CD4-positive, alpha-beta T cell (primary cell): ENCODE measurements at regions of chr7 and their contacts with region 1.

Region 1: GRCh38 chr7:35801392-35802101 is 690 bp downstream of the SEPTIN7 start:
- DNase-seq: peak; percentile 56 to 91 (median 72)
- ATAC-seq: peak; percentile 35
- H3K4me3 ChIP-seq: peak overlapping the region; percentile 84
- H3K4me3 Mint-ChIP-seq: peak overlapping the region; percentile 94
- H3K27ac ChIP-seq: peak overlapping the region; percentile 94 to 99
- H3K27ac Mint-ChIP-seq: peak overlapping the region; percentile 98
- H3K4me1 ChIP-seq: peaks cover 21% of the 10 kb centered on the region
- H3K4me1 Mint-ChIP-seq: peaks cover 55% of the 10 kb centered on the region
- H3K27me3 ChIP-seq: no peaks in the 10 kb centered on the region
- H3K27me3 Mint-ChIP-seq: no peaks in the 10 kb centered on the region
- CTCF ChIP-seq: peak; percentile 41

Region 2: GRCh38 chr7:35694781-35695472 is 106.6 kb before region 1 on chr7 and contains the start of gene HERPUD2:
- CTCF ChIA-PET with region 1: no interaction called
- POLR2A ChIA-PET with region 1: interaction called, 175 read pairs
- intact Hi-C with region 1: loop called (anchors 2 kb)
- DNase-seq: peak; percentile 88 to 96 (median 90)
- ATAC-seq: peak; percentile 82
- H3K4me3 ChIP-seq: peak within 1 kb of the TSS; percentile 97
- H3K4me3 Mint-ChIP-seq: peak within 1 kb of the TSS; percentile 99
- H3K27ac ChIP-seq: peak within 1 kb of the TSS; percentile 94 to 96
- H3K27ac Mint-ChIP-seq: peak within 1 kb of the TSS; percentile 99
- H3K4me1 ChIP-seq: peaks cover 16% of the 10 kb centered on the region
- H3K4me1 Mint-ChIP-seq: peaks cover 60% of the 10 kb centered on the region
- H3K27me3 ChIP-seq: no peaks in the 10 kb centered on the region
- H3K27me3 Mint-ChIP-seq: no peaks in the 10 kb centered on the region
- CTCF ChIP-seq: no peak
- total RNA-seq, gene HERPUD2: 113 to 127 TPM

Region 3: GRCh38 chr7:35729061-35729783 is 72.3 kb before region 1 on chr7:
- CTCF ChIA-PET with region 1: interaction called, 21 read pairs
- POLR2A ChIA-PET with region 1: interaction called, 65 read pairs
- intact Hi-C with region 1: loop called in 1 of 2 experiments (anchors 2 kb)
- DNase-seq: peak in 5 of 14 experiments; percentile 7 to 72 (median 57)
- ATAC-seq: no peak
- H3K4me3 ChIP-seq: no peak overlapping the region
- H3K4me3 Mint-ChIP-seq: no peak overlapping the region
- H3K27ac ChIP-seq: peak overlapping the region in 1 of 2 donors; percentile 3
- H3K27ac Mint-ChIP-seq: no peak overlapping the region
- H3K4me1 ChIP-seq: peaks cover 52% of the 10 kb centered on the region
- H3K4me1 Mint-ChIP-seq: peaks cover 57% of the 10 kb centered on the region
- H3K27me3 ChIP-seq: no peaks in the 10 kb centered on the region
- H3K27me3 Mint-ChIP-seq: no peaks in the 10 kb centered on the region
- CTCF ChIP-seq: no peak

Region 4: GRCh38 chr7:35854311-35854710 is 52.8 kb after region 1 on chr7:
- CTCF ChIA-PET with region 1: no interaction called
- POLR2A ChIA-PET with region 1: interaction called, 31 read pairs
- intact Hi-C with region 1: loop called in 1 of 2 experiments (anchors 5 kb)
- DNase-seq: no peak
- ATAC-seq: no peak
- H3K4me3 ChIP-seq: no peak overlapping the region
- H3K4me3 Mint-ChIP-seq: no peak overlapping the region
- H3K27ac ChIP-seq: no peak overlapping the region
- H3K27ac Mint-ChIP-seq: no peak overlapping the region
- H3K4me1 ChIP-seq: peaks cover 4% of the 10 kb centered on the region
- H3K4me1 Mint-ChIP-seq: peaks cover 84% of the 10 kb centered on the region
- H3K27me3 ChIP-seq: no peaks in the 10 kb centered on the region
- H3K27me3 Mint-ChIP-seq: no peaks in the 10 kb centered on the region
- CTCF ChIP-seq: no peak

Region 5: GRCh38 chr7:36152756-36153570 is 351.4 kb after region 1 on chr7 and contains the start of gene EEPD1:
- CTCF ChIA-PET with region 1: no interaction called
- POLR2A ChIA-PET with region 1: no interaction called
- intact Hi-C with region 1: loop called in 1 of 2 experiments (anchors 10 kb)
- DNase-seq: peak; percentile 99 to 100 (median 100)
- ATAC-seq: peak; percentile 96
- H3K4me3 ChIP-seq: peak within 1 kb of the TSS; percentile 69
- H3K4me3 Mint-ChIP-seq: peak within 1 kb of the TSS; percentile 90
- H3K27ac ChIP-seq: peak within 1 kb of the TSS; percentile 30 to 35
- H3K27ac Mint-ChIP-seq: peak within 1 kb of the TSS; percentile 22
- H3K4me1 ChIP-seq: peaks cover 37% of the 10 kb centered on the region
- H3K4me1 Mint-ChIP-seq: peaks cover 45% of the 10 kb centered on the region
- H3K27me3 ChIP-seq: no peaks in the 10 kb centered on the region
- H3K27me3 Mint-ChIP-seq: no peaks in the 10 kb centered on the region
- CTCF ChIP-seq: no peak
- total RNA-seq, gene EEPD1: 4.4 to 4.6 TPM

Region 6: GRCh38 chr7:37448636-37449361 is 1647.3 kb after region 1 on chr7 and contains the start of gene ELMO1:
- CTCF ChIA-PET with region 1: no interaction called
- POLR2A ChIA-PET with region 1: interaction called, 10 read pairs
- intact Hi-C with region 1: no loop called
- DNase-seq: peak; percentile 62 to 93 (median 74)
- ATAC-seq: peak; percentile 74
- H3K4me3 ChIP-seq: peak within 1 kb of the TSS; percentile 96
- H3K4me3 Mint-ChIP-seq: peak within 1 kb of the TSS; percentile 96
- H3K27ac ChIP-seq: peak within 1 kb of the TSS; percentile 86 to 97
- H3K27ac Mint-ChIP-seq: peak within 1 kb of the TSS; percentile 97
- H3K4me1 ChIP-seq: peaks cover 26% of the 10 kb centered on the region
- H3K4me1 Mint-ChIP-seq: peaks cover 60% of the 10 kb centered on the region
- H3K27me3 ChIP-seq: no peaks in the 10 kb centered on the region
- H3K27me3 Mint-ChIP-seq: peaks cover 11% of the 10 kb centered on the region
- CTCF ChIP-seq: peak; percentile 65
- total RNA-seq, gene ELMO1: 117 to 120 TPM